ENCODE measurements at regions of chr6 and their contacts with region 1.

Region 1: DNA sequence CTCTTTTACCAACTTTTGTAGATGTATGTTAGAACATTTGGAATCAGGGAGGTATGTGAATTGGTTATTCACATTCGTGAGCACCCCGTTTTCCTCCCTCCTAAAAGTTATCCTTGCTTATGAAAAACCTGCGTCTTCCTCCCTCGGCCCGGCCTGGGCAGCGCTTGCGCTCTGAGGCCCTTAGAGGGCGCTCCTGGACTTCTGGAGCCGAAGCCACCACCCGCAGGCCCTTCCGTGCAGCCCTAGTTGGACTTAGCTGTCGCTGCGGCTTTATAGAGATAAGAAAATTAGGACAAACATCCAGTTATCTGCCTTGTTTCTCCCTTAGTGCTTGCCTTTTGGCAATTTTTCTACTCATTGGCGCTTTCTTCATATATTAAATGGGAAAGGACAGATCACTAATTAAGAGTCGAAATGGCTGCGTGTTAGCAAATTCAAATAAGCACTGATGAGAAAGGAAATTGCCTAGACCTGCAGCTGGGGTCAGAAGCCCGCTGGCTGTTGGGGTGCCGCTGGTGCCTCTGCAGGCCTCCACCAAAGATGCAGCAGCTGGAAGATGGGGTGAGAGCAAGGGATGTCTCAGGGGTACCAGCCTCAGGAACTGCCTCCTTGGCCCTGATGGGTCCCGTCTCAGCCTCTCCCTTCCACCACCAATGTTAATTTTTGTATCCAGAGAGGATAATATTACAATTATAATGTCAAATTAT is 5.2 kb downstream of the FNDC1 start:
- DNase-seq: peak in 9 of 10 donors; percentile 64 to 96 (median 75)

Region 2: GRCh38 chr6:159463119-159463829 is 288.9 kb after region 1 on chr6:
- intact Hi-C with region 1: loop called (anchors 10 kb)
- DNase-seq: no peak

Region 3: GRCh38 chr6:159654483-159655098 is 480.2 kb after region 1 on chr6:
- intact Hi-C with region 1: loop called (anchors 1 kb)
- DNase-seq: no peak

Measured in posterior cingulate gyrus (tissue), 11 donors.